Activated CD8-positive, alpha-beta T cell treated with anti-CD3 and anti-CD28 coated beads, Interleukin-2, amount 10 ng/mL, durations not matched to agents 7 days and 5 days (primary cell): ENCODE measurements at regions of chr3 and their contacts with region 1.

Region 1: GRCh38 chr3:9302425-9303181 is 53.2 kb upstream of the SRGAP3 start:
- DNase-seq: peak; percentile 85
- ATAC-seq: peak; percentile 99
- H3K4me3 Mint-ChIP-seq: no peak overlapping the region
- H3K27ac Mint-ChIP-seq: no peak overlapping the region
- H3K4me1 Mint-ChIP-seq: peaks cover 6% of the 10 kb centered on the region
- H3K27me3 Mint-ChIP-seq: peaks cover 10% of the 10 kb centered on the region

Region 2: DNA sequence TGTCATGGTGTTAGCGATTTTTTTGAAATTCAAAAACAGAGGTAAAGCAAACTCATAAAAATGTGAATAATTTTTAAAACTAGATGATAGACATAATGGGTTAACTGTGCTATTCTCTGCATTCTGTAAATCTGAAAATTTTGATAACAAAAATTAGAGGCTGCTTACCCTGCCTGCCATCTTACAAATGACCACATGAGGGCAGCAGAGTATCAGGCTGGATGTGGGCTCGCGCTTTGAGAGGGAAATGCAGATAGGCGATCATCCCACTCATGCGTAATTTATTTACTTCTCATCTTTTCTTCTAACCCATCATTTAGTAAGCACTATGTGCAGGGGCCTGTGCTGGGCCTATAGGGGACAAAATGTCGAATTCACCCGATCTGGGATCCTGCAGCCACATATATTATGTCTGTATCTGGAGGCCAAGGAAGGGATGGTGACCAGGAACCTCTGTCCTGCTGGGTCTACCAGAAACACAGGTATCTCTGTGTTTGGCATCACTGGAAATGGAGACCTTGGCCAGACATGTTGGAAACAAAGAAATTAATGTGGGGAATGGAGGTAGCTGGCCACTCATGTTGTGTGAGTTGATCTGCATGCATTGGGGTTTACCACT is 331.5 kb before region 1 on chr3:
- CTCF ChIA-PET with region 1: interaction called, 116 read pairs
- POLR2A ChIA-PET with region 1: interaction called, 7 read pairs
- DNase-seq: peak; percentile 79
- ATAC-seq: peak; percentile 74
- H3K4me3 Mint-ChIP-seq: no peak overlapping the region
- H3K27ac Mint-ChIP-seq: no peak overlapping the region
- H3K4me1 Mint-ChIP-seq: peaks cover 3% of the 10 kb centered on the region
- H3K27me3 Mint-ChIP-seq: peaks cover 10% of the 10 kb centered on the region

Region 3: GRCh38 chr3:8987645-8988383 is 314.8 kb before region 1 on chr3:
- CTCF ChIA-PET with region 1: interaction called, 85 read pairs
- POLR2A ChIA-PET with region 1: no interaction called
- DNase-seq: peak; percentile 79
- ATAC-seq: peak; percentile 84
- H3K4me3 Mint-ChIP-seq: no peak overlapping the region
- H3K27ac Mint-ChIP-seq: no peak overlapping the region
- H3K4me1 Mint-ChIP-seq: peaks cover 6% of the 10 kb centered on the region
- H3K27me3 Mint-ChIP-seq: no peaks in the 10 kb centered on the region

Region 4: GRCh38 chr3:9168241-9168741 is 134.3 kb before region 1 on chr3:
- CTCF ChIA-PET with region 1: interaction called, 11 read pairs
- POLR2A ChIA-PET with region 1: no interaction called
- DNase-seq: peak; percentile 84
- ATAC-seq: peak; percentile 88
- H3K4me3 Mint-ChIP-seq: peak overlapping the region; percentile 26
- H3K27ac Mint-ChIP-seq: peak overlapping the region; percentile 69
- H3K4me1 Mint-ChIP-seq: peaks cover 10% of the 10 kb centered on the region
- H3K27me3 Mint-ChIP-seq: no peaks in the 10 kb centered on the region

Region 5: GRCh38 chr3:9280451-9281219 is 22.0 kb before region 1 on chr3:
- CTCF ChIA-PET with region 1: interaction called, 10 read pairs
- POLR2A ChIA-PET with region 1: interaction called, 3 read pairs
- DNase-seq: no peak
- ATAC-seq: no peak
- H3K4me3 Mint-ChIP-seq: no peak overlapping the region
- H3K27ac Mint-ChIP-seq: no peak overlapping the region
- H3K4me1 Mint-ChIP-seq: no peaks in the 10 kb centered on the region
- H3K27me3 Mint-ChIP-seq: peaks cover 6% of the 10 kb centered on the region

Region 6: GRCh38 chr3:9409981-9410854 is 107.6 kb after region 1 on chr3:
- CTCF ChIA-PET with region 1: no interaction called
- POLR2A ChIA-PET with region 1: no interaction called
- DNase-seq: no peak
- ATAC-seq: no peak
- H3K4me3 Mint-ChIP-seq: no peak overlapping the region
- H3K27ac Mint-ChIP-seq: no peak overlapping the region
- H3K4me1 Mint-ChIP-seq: peaks cover 40% of the 10 kb centered on the region
- H3K27me3 Mint-ChIP-seq: no peaks in the 10 kb centered on the region